Right ventricle myocardium superior (tissue), 1 donor: ENCODE measurements at regions of chr2 and their contacts with region 1.

Region 1: DNA sequence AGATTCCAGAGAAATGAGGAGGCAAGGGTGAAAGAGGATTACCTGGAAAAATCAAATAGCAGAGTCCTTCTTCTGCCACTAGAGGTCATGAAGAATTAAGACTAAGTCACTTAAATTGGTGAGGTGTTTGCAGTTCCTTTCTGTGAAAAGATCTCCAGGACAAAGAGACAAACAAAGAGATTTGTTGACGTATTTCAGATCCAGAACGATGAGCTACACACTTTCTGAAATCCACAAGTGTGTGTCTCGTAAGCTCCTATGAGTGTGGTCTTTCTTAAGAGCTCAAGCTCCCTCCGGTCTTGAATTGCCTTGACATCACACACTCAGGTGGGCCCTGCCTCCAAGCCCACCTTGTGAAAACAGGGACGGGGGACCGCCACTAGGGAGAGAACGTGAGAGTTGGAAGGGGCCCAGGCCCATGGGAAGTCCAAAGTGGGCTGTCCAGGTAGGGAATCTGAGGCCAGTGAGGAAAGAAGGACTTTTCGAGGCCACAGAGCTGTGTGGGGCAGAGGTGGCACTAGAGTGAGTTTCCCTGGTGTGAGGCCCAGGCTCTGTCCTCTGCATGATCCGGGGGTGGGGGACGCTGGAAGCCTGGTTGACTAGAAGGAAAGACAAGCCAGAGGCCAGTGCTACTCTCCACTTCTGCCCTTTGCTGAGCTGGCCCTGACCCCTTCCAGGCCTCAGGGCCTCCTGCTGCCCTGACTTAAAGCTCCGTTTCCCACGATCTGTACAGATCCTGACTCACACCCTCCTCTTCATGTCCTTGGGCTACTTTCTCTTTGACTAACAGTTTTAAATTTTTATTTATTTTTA is 168.1 kb upstream of the NCK2 start:
- DNase-seq: no peak
- ATAC-seq: peak; percentile 77

Region 2: DNA sequence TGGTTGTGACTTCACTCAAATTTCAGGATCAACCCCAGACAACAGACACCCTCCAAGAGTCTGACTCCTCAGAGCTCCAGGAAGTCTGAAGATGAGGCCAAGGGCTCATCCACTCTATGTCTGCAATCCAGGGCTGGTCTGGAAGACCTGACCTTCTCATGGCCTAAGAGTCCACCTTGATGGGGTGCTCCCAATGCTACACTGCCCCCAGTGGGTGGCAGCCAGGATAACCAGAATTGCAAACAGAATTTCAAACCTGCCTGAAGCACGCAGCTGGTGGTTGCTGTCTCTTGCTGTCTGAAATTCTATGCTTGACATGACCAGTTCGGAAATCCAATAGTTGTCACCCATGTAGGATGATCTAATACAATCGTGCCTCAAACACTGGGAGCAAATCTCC is 521.4 kb after region 1 on chr2:
- intact Hi-C with region 1: loop called (anchors 10 kb)
- DNase-seq: no peak
- ATAC-seq: peak; percentile 14

Region 3: GRCh38 chr2:106990297-106990696 is 1413.7 kb after region 1 on chr2:
- intact Hi-C with region 1: no loop called
- DNase-seq: no peak
- ATAC-seq: no peak